ENCODE measurements at regions of chr19 and their contacts with region 1.

Region 1: DNA sequence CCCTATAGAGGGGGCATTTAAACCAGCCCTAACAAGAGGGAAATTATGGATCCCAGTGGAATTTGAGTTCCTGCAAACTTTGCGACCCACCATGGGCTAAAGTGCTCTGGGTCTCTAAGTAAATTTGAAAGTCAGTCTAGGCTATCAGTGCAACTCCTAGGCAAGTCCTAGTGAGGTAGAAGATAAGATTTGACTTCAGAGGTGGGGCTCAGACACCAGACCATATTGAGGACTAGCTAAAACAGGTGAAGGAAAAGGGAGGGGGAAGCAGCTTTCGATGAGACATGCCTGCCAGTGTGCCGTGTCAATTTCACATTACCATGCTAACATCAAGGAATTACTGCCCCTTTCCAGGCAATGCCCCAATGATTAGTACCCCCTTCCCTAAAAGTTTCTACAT is 38.4 kb downstream of the CD320 start:
- DNase-seq: no peak
- H3K4me3 ChIP-seq: peak overlapping the region; percentile 66 to 88
- H3K4me3 Mint-ChIP-seq: peak overlapping the region; percentile 90 to 97 (median 92)
- H3K27ac ChIP-seq: peak overlapping the region; percentile 76
- H3K27ac Mint-ChIP-seq: peak overlapping the region; percentile 86 to 97 (median 93)
- H3K4me1 ChIP-seq: peaks cover 10% of the 10 kb centered on the region
- H3K4me1 Mint-ChIP-seq: peaks cover 7 to 16% (median 11%) of the 10 kb centered on the region in 4 donors
- H3K27me3 ChIP-seq: no peaks in the 10 kb centered on the region
- H3K27me3 Mint-ChIP-seq: no peaks in the 10 kb centered on the region

Region 2: GRCh38 chr19:8158411-8159074 is 111.2 kb before region 1 on chr19:
- CTCF ChIA-PET with region 1: no interaction called
- POLR2A ChIA-PET with region 1: no interaction called
- intact Hi-C with region 1: loop called (anchors 5 kb)
- DNase-seq: peak; percentile 57 to 70 (median 67)
- H3K4me3 ChIP-seq: no peak overlapping the region
- H3K4me3 Mint-ChIP-seq: no peak overlapping the region
- H3K27ac ChIP-seq: no peak overlapping the region
- H3K27ac Mint-ChIP-seq: peak overlapping the region in 1 of 7 donors; percentile 87
- H3K4me1 ChIP-seq: no peaks in the 10 kb centered on the region
- H3K4me1 Mint-ChIP-seq: peaks cover 4 to 6% (median 4%) of the 10 kb centered on the region in 4 donors
- H3K27me3 ChIP-seq: no peaks in the 10 kb centered on the region
- H3K27me3 Mint-ChIP-seq: peaks cover 11 to 12% of the 10 kb centered on the region in 2 donors

Region 3: GRCh38 chr19:8396563-8397203 is 127.0 kb after region 1 on chr19:
- CTCF ChIA-PET with region 1: no interaction called
- POLR2A ChIA-PET with region 1: no interaction called
- intact Hi-C with region 1: loop called (anchors 5 kb)
- DNase-seq: peak; percentile 57 to 81 (median 75)
- H3K4me3 ChIP-seq: no peak overlapping the region
- H3K4me3 Mint-ChIP-seq: peak overlapping the region in 2 of 8 donors; percentile 48 to 60
- H3K27ac ChIP-seq: no peak overlapping the region
- H3K27ac Mint-ChIP-seq: peak overlapping the region in 6 of 7 donors; percentile 26 to 93 (median 84)
- H3K4me1 ChIP-seq: peaks cover 20% of the 10 kb centered on the region
- H3K4me1 Mint-ChIP-seq: peaks cover 19 to 40% (median 28%) of the 10 kb centered on the region in 4 donors
- H3K27me3 ChIP-seq: no peaks in the 10 kb centered on the region
- H3K27me3 Mint-ChIP-seq: no peaks in the 10 kb centered on the region

Region 4: DNA sequence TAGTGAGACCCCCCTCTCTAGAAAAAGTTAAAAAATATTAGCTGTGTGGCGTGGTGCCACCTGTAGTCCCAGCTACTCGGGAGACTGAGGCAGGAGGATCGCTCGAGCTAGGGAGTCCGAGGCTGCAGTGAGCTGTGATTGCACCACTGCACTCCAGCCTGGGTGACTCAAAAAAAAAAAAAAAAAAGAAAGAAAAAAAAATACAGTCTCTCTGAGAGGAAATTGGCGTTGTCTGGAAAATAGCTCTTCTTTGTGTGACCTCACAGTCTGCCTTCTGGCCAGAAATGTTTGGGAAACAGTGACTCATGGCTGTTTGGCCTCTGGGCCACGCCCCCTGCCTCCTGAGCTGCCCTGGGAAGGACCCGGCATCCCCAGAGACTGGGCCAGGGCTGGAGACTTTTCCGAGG is 154.1 kb after region 1 on chr19:
- CTCF ChIA-PET with region 1: no interaction called
- POLR2A ChIA-PET with region 1: no interaction called
- intact Hi-C with region 1: no loop called
- DNase-seq: no peak
- H3K4me3 ChIP-seq: no peak overlapping the region
- H3K4me3 Mint-ChIP-seq: no peak overlapping the region
- H3K27ac ChIP-seq: no peak overlapping the region
- H3K27ac Mint-ChIP-seq: no peak overlapping the region
- H3K4me1 ChIP-seq: no peaks in the 10 kb centered on the region
- H3K4me1 Mint-ChIP-seq: no peaks in the 10 kb centered on the region
- H3K27me3 ChIP-seq: no peaks in the 10 kb centered on the region
- H3K27me3 Mint-ChIP-seq: no peaks in the 10 kb centered on the region

Measured in CD4-positive, alpha-beta memory T cell (primary cell).